HEK293T (cell line): ENCODE measurements at regions of chr1 and their contacts with region 1.

Region 1: GRCh38 chr1:114282751-114283403 is 129.2 kb upstream of the SYT6 start:
- DNase-seq: peak; percentile 94

Region 2: GRCh38 chr1:114250683-114251572 is 31.9 kb before region 1 on chr1:
- CTCF ChIA-PET with region 1: no interaction called
- POLR2A ChIA-PET with region 1: no interaction called
- DNase-seq: no peak

Region 3: DNA sequence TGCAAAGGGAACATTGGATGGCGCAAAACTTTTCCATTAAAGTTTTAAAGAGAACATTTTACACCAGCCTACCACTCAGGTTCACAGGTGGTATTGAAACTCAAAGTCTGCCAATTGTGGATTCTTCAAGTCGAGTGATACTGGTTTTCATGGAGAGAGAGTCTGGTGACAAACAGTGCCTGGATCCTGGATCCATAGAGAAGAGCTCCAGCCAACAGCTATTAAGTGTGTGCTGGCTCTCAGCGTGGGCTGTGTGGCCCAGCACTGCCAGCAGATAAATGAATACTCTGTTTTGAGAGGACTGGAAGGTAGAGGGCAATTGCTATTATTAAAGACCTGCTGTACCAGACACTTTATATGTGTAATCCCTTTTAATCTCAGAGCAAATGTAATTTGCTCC is 10.3 kb before region 1 on chr1:
- CTCF ChIA-PET with region 1: interaction called, 10 read pairs
- POLR2A ChIA-PET with region 1: no interaction called
- DNase-seq: no peak

Region 4: DNA sequence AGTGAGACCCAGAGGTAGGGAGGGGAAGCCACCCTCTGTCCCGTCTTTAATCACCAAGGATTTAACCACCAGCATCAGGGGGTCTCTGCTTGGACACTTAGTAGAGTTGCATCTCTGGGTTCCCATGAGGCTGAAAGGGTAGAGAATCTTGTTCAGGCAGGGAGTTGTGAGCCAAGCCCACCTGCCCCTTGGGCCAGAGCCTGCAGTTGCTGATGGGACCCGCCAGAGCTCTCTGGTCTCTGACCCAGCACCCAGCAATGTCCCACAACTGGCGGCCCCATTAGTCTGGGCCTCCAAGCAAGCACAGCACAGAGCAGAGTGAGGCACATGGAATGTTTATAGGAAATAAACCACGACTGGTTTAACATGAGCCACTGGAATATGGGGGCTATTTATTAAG is 61.8 kb after region 1 on chr1:
- CTCF ChIA-PET with region 1: no interaction called
- POLR2A ChIA-PET with region 1: no interaction called
- DNase-seq: no peak